PC-9 (cell line): ENCODE measurements at regions of chr2 and their contacts with region 1.

Region 1: DNA sequence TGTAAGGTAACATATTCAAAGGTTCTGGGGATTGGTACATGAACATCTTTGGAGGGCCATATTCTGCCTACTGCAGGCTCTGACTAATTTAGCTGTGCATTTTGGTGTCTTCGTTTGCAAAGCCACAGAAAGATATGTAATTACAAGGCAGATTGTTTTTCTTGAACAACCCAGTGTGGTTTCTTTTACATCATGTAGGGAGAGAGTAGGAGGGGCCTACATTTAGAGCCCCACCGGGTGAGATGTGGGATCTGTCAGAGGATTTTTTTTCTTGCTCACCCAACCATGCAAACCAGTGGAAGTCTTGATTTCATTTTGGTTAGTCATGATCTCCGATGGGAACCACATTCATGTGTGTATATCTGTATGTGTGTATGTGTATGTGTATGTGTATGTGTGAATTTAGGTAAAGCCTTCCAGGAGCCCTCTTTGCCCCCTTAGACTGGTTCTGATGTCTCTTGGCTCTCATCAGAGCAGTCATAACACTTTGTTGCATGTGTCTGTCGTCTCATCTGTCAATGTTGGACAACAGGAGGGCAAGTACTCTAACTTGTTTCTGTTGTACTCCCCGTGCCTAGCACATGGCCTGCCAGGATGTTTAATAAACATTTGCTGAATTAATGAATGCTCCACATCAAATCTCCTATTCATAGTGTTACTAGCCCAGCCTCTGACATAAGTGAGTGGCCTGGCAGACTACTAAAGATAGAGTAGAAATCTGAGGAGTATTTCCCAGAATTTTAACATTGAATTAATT is 239.9 kb downstream of the MTX2 start:
- DNase-seq: no peak
- H3K4me3 ChIP-seq: no peak overlapping the region
- H3K27ac ChIP-seq: no peak overlapping the region
- H3K4me1 ChIP-seq: no peaks in the 10 kb centered on the region
- H3K27me3 ChIP-seq: no peaks in the 10 kb centered on the region
- CTCF ChIP-seq: no peak

Region 2: DNA sequence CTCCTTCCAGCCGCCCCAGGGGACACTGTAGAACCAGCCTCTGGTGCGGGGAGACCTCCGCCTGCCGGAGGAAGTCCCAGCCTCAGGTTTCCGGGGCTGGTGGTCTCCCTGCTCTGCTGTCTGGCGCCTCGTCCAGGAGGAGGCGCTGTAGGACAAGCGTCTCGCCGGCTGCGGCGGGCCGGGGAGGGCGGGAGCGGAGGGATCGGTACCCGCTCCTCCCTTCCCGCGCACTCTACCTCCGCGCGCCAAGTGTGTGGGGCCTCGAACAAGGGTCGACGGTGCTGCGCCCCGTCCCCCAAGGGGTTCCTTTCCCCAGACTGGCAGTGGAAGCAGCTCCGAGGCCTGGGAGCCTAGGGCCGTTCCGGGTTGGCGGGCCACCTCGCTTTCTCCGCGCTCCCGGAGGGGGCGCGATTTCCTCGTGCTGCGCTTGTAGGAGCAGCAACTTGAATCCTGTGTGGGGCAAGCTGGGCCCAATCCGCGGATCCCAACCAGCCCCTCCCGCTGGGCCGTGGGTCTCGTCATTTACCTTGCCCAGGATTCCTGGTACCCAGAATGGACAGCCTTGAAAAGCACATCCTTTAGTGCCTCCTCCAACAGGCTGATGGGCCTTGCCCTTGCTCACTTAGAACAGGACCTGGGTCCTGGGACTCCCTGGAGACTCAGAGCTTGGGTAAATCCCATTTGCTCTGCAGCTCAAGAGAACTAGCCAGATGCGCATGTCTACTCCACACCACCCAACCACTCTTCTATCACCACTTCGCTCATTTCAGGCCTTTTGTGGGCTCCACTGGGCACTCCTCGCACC is 368.4 kb before region 1 on chr2:
- CTCF ChIA-PET with region 1: no interaction called
- POLR2A ChIA-PET with region 1: no interaction called
- intact Hi-C with region 1: no loop called
- DNase-seq: peak in 1 of 2 experiments; percentile 60
- H3K4me3 ChIP-seq: no peak overlapping the region
- H3K27ac ChIP-seq: no peak overlapping the region
- H3K4me1 ChIP-seq: no peaks in the 10 kb centered on the region
- H3K27me3 ChIP-seq: peaks cover 29% of the 10 kb centered on the region; the same call in 1 of the 2 replicates
- CTCF ChIP-seq: peak; percentile 44

Region 3: GRCh38 chr2:176473177-176473576 is 36.0 kb before region 1 on chr2:
- CTCF ChIA-PET with region 1: no interaction called
- POLR2A ChIA-PET with region 1: no interaction called
- intact Hi-C with region 1: no loop called
- DNase-seq: peak in 1 of 2 experiments; percentile 29
- H3K4me3 ChIP-seq: no peak overlapping the region
- H3K27ac ChIP-seq: no peak overlapping the region
- H3K4me1 ChIP-seq: no peaks in the 10 kb centered on the region
- H3K27me3 ChIP-seq: no peaks in the 10 kb centered on the region
- CTCF ChIP-seq: no peak

Region 4: DNA sequence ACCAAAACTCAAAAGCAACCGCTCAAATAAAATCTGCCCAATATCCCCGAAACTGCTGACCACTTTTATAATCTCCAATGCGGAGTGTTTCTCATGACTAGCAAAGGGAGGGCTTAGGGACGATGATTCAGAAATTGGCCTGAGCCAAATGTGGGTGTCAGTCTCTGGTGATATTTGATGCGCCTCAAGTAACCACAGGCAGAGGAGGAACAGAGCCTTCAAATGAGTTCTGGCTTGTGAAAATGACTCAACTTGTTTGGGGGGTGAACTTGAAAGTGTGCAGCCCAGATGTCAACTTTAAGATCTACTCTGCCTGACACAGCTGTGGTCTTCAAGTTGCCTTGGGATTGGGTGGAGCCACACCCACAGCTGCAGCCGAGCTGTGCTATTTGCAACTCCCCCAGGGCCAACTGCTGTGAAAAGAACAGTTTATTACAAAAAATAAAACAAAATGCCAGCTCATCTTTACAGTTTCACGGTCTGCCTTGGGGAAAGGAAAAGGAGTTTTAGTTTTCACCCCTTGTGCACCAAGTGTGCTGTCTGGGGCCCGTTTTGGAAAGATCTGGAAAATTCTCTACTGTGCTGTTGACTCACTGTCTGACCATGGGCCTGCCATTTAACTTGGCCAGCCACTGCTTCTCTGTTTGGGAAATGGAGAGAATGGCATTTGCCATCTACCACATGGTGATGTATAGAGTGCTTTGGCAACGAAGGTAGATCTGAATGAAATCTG is 17.8 kb before region 1 on chr2:
- CTCF ChIA-PET with region 1: no interaction called
- POLR2A ChIA-PET with region 1: interaction called, 5 read pairs
- intact Hi-C with region 1: loop called (anchors 1 kb)
- DNase-seq: peak; percentile 60 to 78
- H3K4me3 ChIP-seq: no peak overlapping the region
- H3K27ac ChIP-seq: no peak overlapping the region
- H3K4me1 ChIP-seq: no peaks in the 10 kb centered on the region
- H3K27me3 ChIP-seq: peaks cover 8% of the 10 kb centered on the region; the same call in 1 of the 2 replicates
- CTCF ChIP-seq: no peak